A673 (cell line): ENCODE measurements at regions of chr10 and their contacts with region 1.

Region 1: DNA sequence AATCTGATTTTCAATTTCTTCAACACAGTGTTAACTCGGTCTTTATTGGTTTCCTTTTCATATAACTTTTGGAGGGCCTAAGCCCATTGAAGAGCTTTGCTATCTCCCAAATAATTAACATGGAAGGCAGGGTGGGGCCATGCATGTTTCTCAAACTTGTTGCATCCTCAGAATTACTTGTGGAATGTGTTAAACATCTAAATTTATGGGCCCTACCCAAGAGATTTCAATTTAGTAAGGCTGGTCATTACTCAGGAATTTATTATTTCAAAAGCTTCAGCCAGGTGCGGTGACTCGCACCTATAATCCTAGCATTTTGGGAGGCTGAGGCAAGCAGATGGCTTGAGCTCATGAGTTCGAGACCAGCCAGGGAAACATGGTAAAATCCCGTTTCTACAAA is 208.9 kb downstream of the SORCS3 start:
- DNase-seq: no peak
- H3K4me3 ChIP-seq: no peak overlapping the region
- H3K27ac ChIP-seq: no peak overlapping the region
- H3K4me1 ChIP-seq: no peaks in the 10 kb centered on the region
- H3K27me3 ChIP-seq: peaks cover 64% of the 10 kb centered on the region
- CTCF ChIP-seq: no peak

Region 2: GRCh38 chr10:103772096-103772845 is 1077.8 kb before region 1 on chr10:
- CTCF ChIA-PET with region 1: no interaction called
- POLR2A ChIA-PET with region 1: no interaction called
- intact Hi-C with region 1: no loop called
- DNase-seq: peak; percentile 90
- H3K4me3 ChIP-seq: peak overlapping the region; percentile 37
- H3K27ac ChIP-seq: peak overlapping the region; percentile 57
- H3K4me1 ChIP-seq: peaks cover 23% of the 10 kb centered on the region
- H3K27me3 ChIP-seq: no peaks in the 10 kb centered on the region
- CTCF ChIP-seq: no peak

Region 3: DNA sequence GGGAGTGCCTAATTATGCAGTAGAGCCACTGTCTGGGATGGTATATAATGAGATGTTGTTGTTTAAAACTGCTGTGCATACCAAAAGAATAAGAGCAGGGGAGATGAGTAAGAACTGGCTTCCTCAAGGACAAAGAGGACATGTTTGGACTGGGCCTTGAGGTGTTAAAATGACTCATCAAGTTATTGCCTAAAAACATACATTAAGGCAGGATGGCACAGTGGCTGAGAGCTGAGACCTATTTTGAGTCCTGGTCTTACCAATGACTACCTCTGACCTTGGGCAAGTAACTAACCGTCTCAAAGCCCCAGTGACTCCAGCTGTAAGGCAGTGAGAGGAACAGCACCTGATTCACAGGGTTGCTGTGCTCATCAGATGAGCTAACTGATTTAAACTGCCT is 425.3 kb before region 1 on chr10:
- CTCF ChIA-PET with region 1: no interaction called
- POLR2A ChIA-PET with region 1: interaction called, 17 read pairs
- intact Hi-C with region 1: no loop called
- DNase-seq: no peak
- H3K4me3 ChIP-seq: no peak overlapping the region
- H3K27ac ChIP-seq: no peak overlapping the region
- H3K4me1 ChIP-seq: no peaks in the 10 kb centered on the region
- H3K27me3 ChIP-seq: peaks cover 7% of the 10 kb centered on the region
- CTCF ChIP-seq: no peak

Region 4: GRCh38 chr10:104947314-104947713 is 97.3 kb after region 1 on chr10:
- CTCF ChIA-PET with region 1: no interaction called
- POLR2A ChIA-PET with region 1: no interaction called
- intact Hi-C with region 1: no loop called
- DNase-seq: no peak
- H3K4me3 ChIP-seq: no peak overlapping the region
- H3K27ac ChIP-seq: no peak overlapping the region
- H3K4me1 ChIP-seq: no peaks in the 10 kb centered on the region
- H3K27me3 ChIP-seq: peaks cover 36% of the 10 kb centered on the region
- CTCF ChIP-seq: no peak

Region 5: DNA sequence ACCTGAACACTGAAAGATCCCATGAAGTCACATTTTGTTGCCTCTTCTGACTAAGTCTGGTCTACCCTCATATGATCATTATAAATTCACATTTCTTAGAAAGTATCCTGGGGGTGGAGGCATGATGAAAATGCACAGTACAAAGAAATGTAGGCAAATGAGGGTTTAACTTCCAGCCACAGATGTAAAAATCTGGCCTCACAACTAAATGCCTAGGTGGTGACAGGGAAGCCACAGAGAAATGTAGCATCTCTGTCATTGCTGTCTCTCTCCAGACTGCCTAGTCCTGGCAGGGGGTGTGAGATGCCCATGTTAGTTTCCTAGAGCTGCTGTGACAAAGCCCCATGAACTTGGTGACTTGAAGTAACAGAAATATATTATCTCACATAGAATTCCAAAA is 187.0 kb after region 1 on chr10:
- CTCF ChIA-PET with region 1: no interaction called
- POLR2A ChIA-PET with region 1: no interaction called
- intact Hi-C with region 1: no loop called
- DNase-seq: no peak
- H3K4me3 ChIP-seq: no peak overlapping the region
- H3K27ac ChIP-seq: no peak overlapping the region
- H3K4me1 ChIP-seq: no peaks in the 10 kb centered on the region
- H3K27me3 ChIP-seq: peaks cover 29% of the 10 kb centered on the region
- CTCF ChIP-seq: no peak